HEK293 (cell line): ENCODE measurements at regions of chrX and their contacts with region 1.

Region 1: GRCh38 chrX:131633285-131633917 is 89.5 kb downstream of the OR13H1 start:
- H3K4me3 ChIP-seq: no peak overlapping the region
- H3K27ac ChIP-seq: no peak overlapping the region
- H3K4me1 ChIP-seq: no peaks in the 10 kb centered on the region
- CTCF ChIP-seq: peak; percentile 69; the same call in 1 of the 2 replicates

Region 2: DNA sequence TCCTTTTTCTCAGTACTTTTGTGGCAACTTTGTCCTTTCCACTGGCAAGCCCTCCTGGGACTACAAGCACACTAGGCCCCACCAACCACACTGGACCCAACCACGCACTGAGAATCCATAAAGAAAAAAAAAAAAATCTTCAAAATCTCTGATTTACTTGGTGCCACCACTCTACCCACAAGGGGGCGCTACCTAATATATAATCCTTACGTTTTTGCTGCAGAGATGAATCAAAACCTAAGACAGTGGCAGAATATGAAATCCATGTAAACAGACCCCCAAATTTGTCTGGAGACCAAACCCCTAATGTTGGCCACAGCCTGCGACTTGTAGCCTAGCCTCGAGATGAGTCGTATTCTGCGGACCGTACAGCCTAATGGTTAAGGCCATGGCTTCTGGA is 638.7 kb before region 1 on chrX:
- CTCF ChIA-PET with region 1: interaction called, 10 read pairs
- POLR2A ChIA-PET with region 1: no interaction called
- H3K4me3 ChIP-seq: no peak overlapping the region
- H3K27ac ChIP-seq: no peak overlapping the region
- H3K4me1 ChIP-seq: no peaks in the 10 kb centered on the region
- CTCF ChIP-seq: no peak

Region 3: GRCh38 chrX:131621650-131622049 is 11.8 kb before region 1 on chrX:
- CTCF ChIA-PET with region 1: interaction called, 22 read pairs
- POLR2A ChIA-PET with region 1: no interaction called
- H3K4me3 ChIP-seq: no peak overlapping the region
- H3K27ac ChIP-seq: no peak overlapping the region
- H3K4me1 ChIP-seq: no peaks in the 10 kb centered on the region
- CTCF ChIP-seq: no peak